Aorta (tissue), 5 donors: ENCODE measurements at regions of chr9 and their contacts with region 1.

Region 1: DNA sequence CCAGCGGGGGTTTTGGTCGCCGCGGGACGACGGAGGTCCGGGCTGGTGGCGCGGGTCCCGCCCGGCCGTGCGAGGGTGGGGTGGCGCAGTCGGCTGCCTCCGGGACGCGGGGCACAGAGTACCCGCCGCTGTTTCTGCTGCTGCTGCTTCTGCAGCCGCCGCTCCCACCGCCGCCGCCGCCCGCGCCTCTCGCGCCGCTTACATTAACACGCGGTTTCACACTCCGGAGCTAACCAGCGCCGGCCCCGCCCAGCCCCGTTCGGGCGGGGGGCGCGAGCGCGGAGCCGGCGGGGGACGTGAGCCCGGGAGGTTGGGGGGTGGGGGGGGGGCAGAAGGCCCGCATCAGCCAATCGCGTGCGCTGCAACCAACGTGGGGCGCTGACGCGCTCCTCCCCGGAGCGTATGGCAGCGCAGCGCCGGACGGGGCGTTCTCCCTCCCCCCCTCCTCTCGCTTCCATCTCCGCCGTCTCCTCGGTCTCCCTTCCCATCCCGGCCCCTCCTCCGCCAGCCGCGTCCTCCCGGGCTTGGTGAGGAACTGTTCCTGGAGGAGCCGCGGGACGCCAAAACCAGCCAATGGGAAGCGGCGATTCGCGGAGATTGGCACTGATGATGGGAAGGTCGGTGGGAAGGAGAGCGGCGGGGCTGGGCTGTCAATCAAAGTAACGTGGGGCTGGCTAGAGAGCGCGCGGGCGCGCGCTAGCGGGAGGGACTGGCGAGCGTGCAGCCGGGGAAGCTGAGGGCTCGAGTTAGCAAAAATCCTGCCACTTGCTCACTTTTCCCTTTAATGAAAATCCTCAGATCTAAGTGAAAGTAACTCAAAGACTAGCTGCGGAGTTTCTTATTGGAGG is at the start of gene TLE1:
- DNase-seq: peak; percentile 100
- ATAC-seq: peak; percentile 97
- H3K4me3 ChIP-seq: peak within 1 kb of the TSS; percentile 78 to 96
- H3K27ac ChIP-seq: peak within 1 kb of the TSS; percentile 87 to 92
- H3K4me1 ChIP-seq: peaks cover 0 to 5% of the 10 kb centered on the region in 2 donors
- H3K27me3 ChIP-seq: no peaks in the 10 kb centered on the region
- total RNA-seq, gene TLE1: 31.0 to 32.7 TPM

Region 2: DNA sequence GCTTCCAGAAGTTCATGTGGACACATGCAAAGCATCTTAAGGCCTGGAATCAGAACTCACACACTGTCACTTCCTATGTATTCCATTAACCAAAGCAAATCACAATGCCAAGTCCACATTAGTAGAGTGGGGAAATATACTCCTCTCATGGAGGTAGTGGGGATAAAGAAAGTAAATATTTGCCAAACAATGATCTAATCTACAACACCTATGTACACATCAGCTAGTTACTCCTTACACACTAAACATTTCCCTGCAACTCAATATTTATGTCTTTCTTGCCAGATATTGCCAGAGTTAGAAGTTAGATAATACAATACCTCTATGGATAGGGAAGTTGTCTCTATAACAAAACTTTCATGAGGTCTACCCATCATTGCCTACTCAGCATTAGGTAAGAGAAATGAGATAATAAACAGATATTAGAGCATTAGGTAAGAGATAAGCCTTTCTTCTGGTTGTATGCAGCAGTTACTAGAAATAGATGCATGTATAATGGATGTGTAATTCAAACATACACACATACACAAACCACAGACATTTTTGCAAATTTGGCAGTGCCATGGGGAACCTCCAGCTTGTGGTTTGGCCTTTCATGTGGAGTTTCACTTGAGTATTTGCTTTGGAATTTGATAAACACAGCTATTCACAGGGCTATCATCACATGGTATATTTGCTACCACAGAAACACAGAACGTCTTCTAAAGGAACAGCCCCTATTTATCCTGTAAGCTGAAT is 196.7 kb before region 1 on chr9:
- intact Hi-C with region 1: loop called in 1 of 2 experiments (anchors 10 kb)
- DNase-seq: no peak
- ATAC-seq: no peak
- H3K4me3 ChIP-seq: no peak overlapping the region
- H3K27ac ChIP-seq: no peak overlapping the region
- H3K4me1 ChIP-seq: peaks cover 0 to 4% of the 10 kb centered on the region in 2 donors
- H3K27me3 ChIP-seq: no peaks in the 10 kb centered on the region

Region 3: DNA sequence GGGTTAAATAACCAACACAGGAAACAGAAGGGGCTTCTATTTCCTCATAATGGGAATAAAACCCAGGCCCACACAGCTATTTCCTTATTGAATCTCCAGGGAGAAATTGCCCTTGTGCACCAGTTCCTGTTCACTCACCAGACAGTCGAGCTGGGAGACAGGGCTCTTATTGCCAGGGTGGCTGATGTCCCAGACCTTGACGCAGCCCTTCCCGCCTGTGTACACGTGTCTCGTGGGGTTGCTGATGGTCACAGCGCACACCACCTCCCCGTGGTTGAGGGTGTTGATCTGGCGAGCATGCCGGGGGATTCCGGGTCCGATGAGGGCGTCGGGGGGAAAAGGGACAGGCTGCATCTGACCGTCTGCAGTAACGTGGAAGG is 96.7 kb before region 1 on chr9:
- intact Hi-C with region 1: loop called in 1 of 2 experiments (anchors 5 kb)
- DNase-seq: peak; percentile 84 to 86
- ATAC-seq: peak; percentile 75
- H3K4me3 ChIP-seq: no peak overlapping the region
- H3K27ac ChIP-seq: peak overlapping the region in 1 of 2 donors; percentile 19
- H3K4me1 ChIP-seq: peaks cover 0 to 13% of the 10 kb centered on the region in 2 donors
- H3K27me3 ChIP-seq: no peaks in the 10 kb centered on the region

Region 4: DNA sequence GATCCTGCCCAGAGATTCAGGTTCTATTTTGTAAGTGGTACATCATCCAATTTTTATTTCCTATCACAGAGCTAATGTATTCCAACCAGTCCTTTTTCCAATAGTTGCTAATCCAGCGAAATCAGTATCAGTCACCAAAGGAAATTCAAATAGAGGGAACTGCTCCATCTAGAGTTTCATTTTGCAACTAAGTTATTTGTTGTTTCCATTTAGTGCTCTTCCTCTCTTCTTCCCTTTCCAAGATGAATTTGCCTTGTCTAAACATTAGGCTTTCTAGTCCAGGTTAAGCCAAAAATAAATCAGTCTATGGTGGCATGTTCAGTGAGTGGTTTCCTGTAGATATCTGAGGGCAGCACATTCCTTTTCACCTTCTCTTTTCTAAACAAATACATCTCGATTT is 158.9 kb after region 1 on chr9:
- intact Hi-C with region 1: loop called (anchors 2 to 5 kb)
- DNase-seq: no peak
- ATAC-seq: peak; percentile 58
- H3K4me3 ChIP-seq: no peak overlapping the region
- H3K27ac ChIP-seq: no peak overlapping the region
- H3K4me1 ChIP-seq: no peaks in the 10 kb centered on the region
- H3K27me3 ChIP-seq: no peaks in the 10 kb centered on the region

Region 5: GRCh38 chr9:81874931-81875330 is 185.4 kb after region 1 on chr9:
- intact Hi-C with region 1: no loop called
- DNase-seq: no peak
- ATAC-seq: no peak
- H3K4me3 ChIP-seq: no peak overlapping the region
- H3K27ac ChIP-seq: no peak overlapping the region
- H3K4me1 ChIP-seq: no peaks in the 10 kb centered on the region
- H3K27me3 ChIP-seq: no peaks in the 10 kb centered on the region